Activated naive CD4-positive, alpha-beta T cell treated with anti-CD3 and anti-CD28 coated beads, Interleukin-2, amount 10 ng/mL, durations not matched to agents 7 days and 5 days (primary cell): ENCODE measurements at regions of chr6 and their contacts with region 1.

Region 1: DNA sequence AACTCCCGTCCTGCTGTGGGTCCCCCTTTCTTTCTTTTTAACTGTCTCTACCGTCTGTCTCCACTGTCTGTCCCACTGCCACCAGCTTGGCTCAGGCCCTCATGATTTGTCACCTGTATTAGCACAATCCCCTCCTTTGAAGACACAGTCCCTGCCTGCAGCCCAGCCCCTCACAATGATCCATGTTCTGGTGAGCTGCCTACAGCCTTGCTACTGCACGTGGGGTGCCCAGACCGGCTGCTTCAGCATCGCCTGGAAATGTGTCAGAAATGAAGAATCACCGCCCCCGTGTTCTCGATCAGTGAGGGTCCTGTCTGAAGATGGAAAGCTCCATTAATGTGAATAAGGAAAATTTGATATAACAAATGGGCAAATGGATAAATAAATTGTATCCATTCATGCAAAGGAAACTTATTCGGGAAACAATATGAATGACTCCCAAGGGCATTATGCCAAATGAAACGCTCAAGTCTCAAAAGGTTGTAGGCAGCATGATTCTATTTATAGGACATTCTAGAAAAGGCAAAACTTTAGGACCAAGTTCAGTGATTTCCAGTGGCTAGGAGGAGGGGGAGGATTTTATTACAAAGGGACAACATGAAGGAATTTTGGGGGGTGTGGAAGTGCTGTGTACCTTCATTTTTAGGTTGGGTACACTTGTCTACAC is 59.4 kb upstream of the CD83 start:
- DNase-seq: no peak
- H3K4me3 Mint-ChIP-seq: no peak overlapping the region
- H3K27ac Mint-ChIP-seq: no peak overlapping the region
- H3K4me1 Mint-ChIP-seq: no peaks in the 10 kb centered on the region
- H3K27me3 Mint-ChIP-seq: peaks cover 30% of the 10 kb centered on the region

Region 2: GRCh38 chr6:14046476-14047068 is 11.6 kb before region 1 on chr6:
- CTCF ChIA-PET with region 1: interaction called, 75 read pairs
- DNase-seq: peak; percentile 58
- H3K4me3 Mint-ChIP-seq: no peak overlapping the region
- H3K27ac Mint-ChIP-seq: no peak overlapping the region
- H3K4me1 Mint-ChIP-seq: no peaks in the 10 kb centered on the region
- H3K27me3 Mint-ChIP-seq: peaks cover 30% of the 10 kb centered on the region